ENCODE measurements at regions of chr1 and their contacts with region 1.

Region 1: GRCh38 chr1:203127666-203128430 is at the start of gene ADORA1:
- DNase-seq: peak in 1 of 3 donors; percentile 12
- H3K4me3 ChIP-seq: peak within 1 kb of the TSS in 1 of 3 experiments; percentile 14
- H3K4me3 Mint-ChIP-seq: peak within 1 kb of the TSS; percentile 67 to 87
- H3K27ac ChIP-seq: no peak within 1 kb of the TSS
- H3K27ac Mint-ChIP-seq: peak within 1 kb of the TSS in 2 of 7 donors; percentile 33 to 45
- H3K4me1 ChIP-seq: peaks cover 54 to 57% of the 10 kb centered on the region in 2 donors
- H3K4me1 Mint-ChIP-seq: peaks cover 54% of the 10 kb centered on the region
- H3K27me3 ChIP-seq: peaks cover 43 to 68% of the 10 kb centered on the region in 2 donors
- H3K27me3 Mint-ChIP-seq: peaks cover 52 to 78% (median 77%) of the 10 kb centered on the region in 3 donors
- CTCF ChIP-seq: no peak
- polyA plus RNA-seq, gene ADORA1: 0.13 to 1.1 TPM in 2 of 3 donors, not detected in the other

Region 2: GRCh38 chr1:202888531-202889360 is 239.1 kb before region 1 on chr1 and contains the start of gene RABIF:
- intact Hi-C with region 1: no loop called
- DNase-seq: peak; percentile 94 to 98 (median 95)
- H3K4me3 ChIP-seq: peak within 1 kb of the TSS; percentile 91 to 93 (median 93)
- H3K4me3 Mint-ChIP-seq: peak within 1 kb of the TSS; percentile 96 to 97
- H3K27ac ChIP-seq: peak within 1 kb of the TSS; percentile 96 to 98
- H3K27ac Mint-ChIP-seq: peak within 1 kb of the TSS; percentile 96 to 99 (median 99)
- H3K4me1 ChIP-seq: peaks cover 14 to 30% of the 10 kb centered on the region in 2 donors
- H3K4me1 Mint-ChIP-seq: peaks cover 22% of the 10 kb centered on the region
- H3K27me3 ChIP-seq: no peaks in the 10 kb centered on the region
- H3K27me3 Mint-ChIP-seq: peaks cover 0 to 2% (median 0%) of the 10 kb centered on the region in 3 donors
- CTCF ChIP-seq: no peak
- polyA plus RNA-seq, gene RABIF: 7.8 to 24.6 (median 22.8) TPM

Region 3: DNA sequence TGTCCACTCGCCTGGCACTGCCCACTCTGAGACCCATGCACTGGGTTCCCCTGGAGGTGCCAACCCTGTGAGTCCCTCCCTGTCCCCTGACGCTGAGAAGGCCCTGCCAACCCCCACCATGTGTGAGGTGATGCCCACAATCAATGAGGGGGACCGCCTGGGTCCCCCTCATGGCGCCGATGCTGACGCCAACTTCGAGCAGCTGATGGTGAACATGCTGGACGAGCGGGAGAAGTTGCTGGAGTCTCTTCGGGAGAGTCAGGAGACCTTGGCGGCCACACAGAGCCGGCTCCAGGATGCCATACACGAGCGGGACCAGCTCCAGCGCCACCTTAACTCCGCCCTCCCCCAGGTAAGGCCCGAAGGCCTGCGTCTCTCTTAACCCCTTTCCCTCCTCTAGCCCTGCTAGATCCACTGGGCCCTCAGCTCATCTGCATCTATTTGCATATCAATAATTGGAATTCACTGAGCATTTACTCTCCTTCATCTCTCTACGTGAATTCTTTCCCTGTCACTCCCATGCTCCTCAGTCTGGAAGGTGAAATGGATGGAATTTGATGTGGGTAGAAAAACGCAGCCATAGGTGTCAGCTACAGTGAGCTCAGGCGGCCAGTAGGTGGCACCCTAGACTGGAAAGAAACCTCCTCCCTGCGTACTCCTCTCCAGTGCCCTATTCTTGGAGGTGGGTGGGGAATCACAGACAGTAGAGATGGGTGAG is 88.8 kb before region 1 on chr1:
- intact Hi-C with region 1: loop called in 1 of 2 experiments (anchors 10 kb)
- DNase-seq: peak; percentile 53 to 71 (median 68)
- H3K4me3 ChIP-seq: no peak overlapping the region
- H3K4me3 Mint-ChIP-seq: peak overlapping the region in 1 of 2 donors; percentile 35
- H3K27ac ChIP-seq: no peak overlapping the region
- H3K27ac Mint-ChIP-seq: no peak overlapping the region
- H3K4me1 ChIP-seq: no peaks in the 10 kb centered on the region
- H3K4me1 Mint-ChIP-seq: peaks cover 12% of the 10 kb centered on the region
- H3K27me3 ChIP-seq: peaks cover 0 to 2% of the 10 kb centered on the region in 2 donors
- H3K27me3 Mint-ChIP-seq: peaks cover 3 to 36% (median 17%) of the 10 kb centered on the region in 3 donors
- CTCF ChIP-seq: peak; percentile 95

Region 4: GRCh38 chr1:203177470-203178039 is 49.7 kb after region 1 on chr1:
- intact Hi-C with region 1: loop called in 1 of 2 experiments (anchors 5 kb)
- DNase-seq: peak in 2 of 3 donors; percentile 28 to 58
- H3K4me3 ChIP-seq: no peak overlapping the region
- H3K4me3 Mint-ChIP-seq: no peak overlapping the region
- H3K27ac ChIP-seq: no peak overlapping the region
- H3K27ac Mint-ChIP-seq: peak overlapping the region in 2 of 7 donors; percentile 35 to 57
- H3K4me1 ChIP-seq: peaks cover 38 to 46% of the 10 kb centered on the region in 2 donors
- H3K4me1 Mint-ChIP-seq: peaks cover 61% of the 10 kb centered on the region
- H3K27me3 ChIP-seq: no peaks in the 10 kb centered on the region
- H3K27me3 Mint-ChIP-seq: peaks cover 3 to 12% (median 9%) of the 10 kb centered on the region in 3 donors
- CTCF ChIP-seq: no peak

Region 5: GRCh38 chr1:203475012-203475981 is 347.4 kb after region 1 on chr1 and contains the start of gene PRELP:
- intact Hi-C with region 1: no loop called
- DNase-seq: no peak
- H3K4me3 ChIP-seq: no peak within 1 kb of the TSS
- H3K4me3 Mint-ChIP-seq: peak within 1 kb of the TSS in 1 of 2 donors; percentile 67
- H3K27ac ChIP-seq: no peak within 1 kb of the TSS
- H3K27ac Mint-ChIP-seq: no peak within 1 kb of the TSS
- H3K4me1 ChIP-seq: peaks cover 7 to 8% of the 10 kb centered on the region in 2 donors
- H3K4me1 Mint-ChIP-seq: peaks cover 9% of the 10 kb centered on the region
- H3K27me3 ChIP-seq: peaks cover 0 to 2% of the 10 kb centered on the region in 2 donors
- H3K27me3 Mint-ChIP-seq: peaks cover 13 to 32% (median 13%) of the 10 kb centered on the region in 3 donors
- CTCF ChIP-seq: no peak
- polyA plus RNA-seq, gene PRELP: not detected